Dorsolateral prefrontal cortex (tissue), 120 donors: ENCODE measurements at regions of chr6 and their contacts with region 1.

Region 1: DNA sequence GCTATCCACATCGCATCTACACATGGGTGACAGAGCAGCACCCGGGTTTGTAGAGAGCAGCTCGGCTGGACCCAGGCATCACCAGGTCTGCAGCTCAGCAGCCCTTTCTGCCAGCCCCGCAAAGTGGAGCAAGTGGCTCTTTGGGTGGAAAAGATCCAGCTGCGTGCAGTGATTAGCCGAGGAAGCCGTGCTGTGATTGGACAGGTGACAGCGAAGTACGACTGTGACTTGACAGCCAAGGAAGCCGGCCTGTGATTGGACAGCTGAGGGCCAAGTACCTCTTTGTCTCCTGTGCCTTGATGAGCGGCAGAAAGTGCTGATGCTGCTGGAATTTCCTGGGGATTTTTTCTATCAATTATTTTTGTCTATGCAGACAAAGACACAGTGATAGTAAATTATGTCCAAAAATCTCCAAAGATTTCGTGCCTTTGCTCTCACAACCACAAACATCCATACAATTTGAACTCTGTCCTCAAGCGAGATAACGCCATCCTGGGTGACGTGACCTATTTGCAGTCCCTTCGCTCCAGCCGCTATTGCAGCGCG is 62.3 kb upstream of the GPR31 start:
- DNase-seq: peak in 6 of 10 donors; percentile 26 to 79 (median 56)
- H3K4me3 ChIP-seq: no peak overlapping the region
- H3K27ac ChIP-seq: no peak overlapping the region
- H3K27me3 ChIP-seq: peaks cover 0 to 3% (median 0%) of the 10 kb centered on the region in 45 donors
- CTCF ChIP-seq: no peak

Region 2: GRCh38 chr6:167291623-167292300 is 71.7 kb after region 1 on chr6:
- intact Hi-C with region 1: loop called in 1 of 2 experiments (anchors 5 kb)
- DNase-seq: no peak
- H3K4me3 ChIP-seq: no peak overlapping the region
- H3K27ac ChIP-seq: no peak overlapping the region
- H3K27me3 ChIP-seq: peaks cover 0 to 5% (median 0%) of the 10 kb centered on the region in 45 donors
- CTCF ChIP-seq: no peak